MCF 10A (cell line): ENCODE measurements at regions of chr7 and their contacts with region 1.

Region 1: DNA sequence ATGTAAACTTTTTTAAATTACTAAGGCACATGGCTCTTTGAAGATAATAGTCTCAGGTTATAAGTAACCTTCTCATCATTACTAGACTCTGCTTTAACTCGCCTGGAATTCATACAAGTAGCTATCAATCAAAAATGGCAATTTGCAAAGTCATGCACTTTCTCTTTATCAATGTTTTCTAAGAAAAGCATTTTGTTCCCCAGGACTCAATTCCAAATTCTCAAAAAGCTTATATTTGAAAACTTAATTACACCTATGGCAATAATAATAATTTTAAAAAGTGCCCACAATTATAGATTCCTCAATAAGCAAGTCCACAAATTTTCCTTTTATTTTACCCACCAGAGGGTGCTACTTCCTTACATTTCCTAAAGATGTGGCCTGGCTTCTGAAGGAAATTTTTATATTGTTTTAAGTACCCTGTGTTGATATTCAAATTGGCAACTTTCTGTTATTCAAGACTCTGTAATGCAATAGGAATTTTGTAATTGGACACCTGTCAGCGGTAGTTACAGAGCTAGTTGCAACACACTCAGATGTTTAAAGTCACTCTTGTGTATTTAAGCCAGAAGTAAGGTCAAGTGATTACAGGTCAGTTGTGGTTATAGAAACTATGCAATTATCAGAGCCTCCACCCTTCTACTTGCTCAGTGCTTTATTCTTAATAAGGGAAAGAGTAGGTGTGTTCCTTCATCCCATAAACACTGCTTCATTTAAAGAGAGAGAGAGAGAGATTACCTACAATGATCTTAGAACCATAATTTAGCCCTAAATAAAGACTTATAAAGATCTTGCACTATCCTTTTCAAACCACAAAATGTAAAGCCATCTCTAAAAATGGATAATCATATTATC is 47.1 kb upstream of the HYAL4 start:
- DNase-seq: peak; percentile 95
- H3K4me3 Mint-ChIP-seq: peak overlapping the region; percentile 63
- H3K27ac Mint-ChIP-seq: peak overlapping the region; percentile 94
- H3K4me1 Mint-ChIP-seq: peaks cover 12% of the 10 kb centered on the region
- H3K27me3 Mint-ChIP-seq: no peaks in the 10 kb centered on the region
- CTCF ChIP-seq: peak; percentile 51

Region 2: GRCh38 chr7:123580406-123581161 is 217.3 kb before region 1 on chr7:
- CTCF ChIA-PET with region 1: interaction called, 10 read pairs
- POLR2A ChIA-PET with region 1: no interaction called
- intact Hi-C with region 1: loop called (anchors 5 kb)
- DNase-seq: peak; percentile 68
- H3K4me3 Mint-ChIP-seq: no peak overlapping the region
- H3K27ac Mint-ChIP-seq: no peak overlapping the region
- H3K4me1 Mint-ChIP-seq: no peaks in the 10 kb centered on the region
- H3K27me3 Mint-ChIP-seq: no peaks in the 10 kb centered on the region
- CTCF ChIP-seq: peak; percentile 66

Region 3: DNA sequence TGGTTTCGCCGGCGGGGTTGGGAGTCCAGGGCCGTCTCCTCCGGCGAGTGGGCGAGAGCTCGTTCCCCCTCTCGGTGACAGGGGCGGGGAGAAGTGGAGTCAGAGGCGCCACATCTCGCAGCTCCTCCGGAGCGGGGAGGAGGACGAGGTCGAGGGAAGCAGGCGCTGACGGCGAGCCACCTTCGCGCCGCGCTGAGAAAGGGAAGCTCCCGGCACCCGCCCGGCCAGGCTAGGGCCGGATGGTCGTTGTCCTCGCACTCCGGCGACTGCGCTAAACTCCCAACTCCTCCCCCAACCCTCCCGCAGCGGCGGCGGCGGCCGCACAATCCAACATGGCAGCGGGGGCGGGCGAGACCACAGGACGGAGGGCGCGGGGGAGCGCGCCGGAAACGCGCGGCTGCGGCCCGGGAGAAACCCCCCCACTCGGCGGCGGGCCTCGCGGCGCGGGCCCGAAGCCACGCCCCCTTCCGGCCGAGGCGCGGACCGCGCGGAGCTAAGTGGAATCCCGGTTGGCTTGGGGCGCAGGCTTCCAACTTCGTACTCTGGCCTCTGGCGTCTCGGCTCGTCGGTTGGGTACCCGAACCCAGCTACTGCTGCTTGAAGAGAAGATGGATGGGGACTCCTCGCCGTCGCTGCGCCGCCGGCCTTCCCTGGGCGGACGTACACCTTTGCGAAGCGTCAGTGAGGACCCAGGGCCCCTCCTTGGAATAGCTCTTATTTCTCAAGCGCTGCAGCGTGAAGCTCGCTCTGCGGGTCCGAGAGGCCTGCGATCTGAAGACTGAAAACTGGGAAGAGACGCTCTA is 49.0 kb before region 1 on chr7 and contains the start of gene WASL:
- CTCF ChIA-PET with region 1: interaction called, 8 read pairs
- POLR2A ChIA-PET with region 1: interaction called, 48 read pairs
- intact Hi-C with region 1: loop called (anchors 1 kb)
- DNase-seq: peak; percentile 87
- H3K4me3 Mint-ChIP-seq: peak within 1 kb of the TSS; percentile 98
- H3K27ac Mint-ChIP-seq: peak within 1 kb of the TSS; percentile 99
- H3K4me1 Mint-ChIP-seq: peaks cover 44% of the 10 kb centered on the region
- H3K27me3 Mint-ChIP-seq: no peaks in the 10 kb centered on the region
- CTCF ChIP-seq: no peak
- total RNA-seq, gene WASL: 34.7 and 38.8 TPM in 2 replicates

Region 4: DNA sequence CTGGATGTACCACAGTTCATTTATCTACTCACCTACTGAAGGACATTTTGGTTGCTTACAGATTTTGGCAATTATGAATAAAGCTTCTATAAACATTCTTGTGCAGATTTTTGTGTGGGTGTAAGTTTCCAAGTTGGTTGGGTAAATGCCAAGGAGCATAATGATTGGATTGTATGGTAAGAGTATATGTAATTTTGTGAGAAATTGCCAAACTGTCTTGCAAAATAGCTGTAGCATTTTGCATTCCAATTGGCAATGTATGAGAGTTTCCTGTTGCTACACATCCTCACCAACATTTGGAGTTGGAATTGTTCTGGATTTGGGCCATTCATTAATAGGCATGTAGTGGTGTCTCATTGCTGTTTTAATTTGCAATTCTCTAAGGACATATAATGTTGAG is 13.2 kb after region 1 on chr7:
- CTCF ChIA-PET with region 1: interaction called, 7 read pairs
- POLR2A ChIA-PET with region 1: interaction called, 12 read pairs
- intact Hi-C with region 1: no loop called
- DNase-seq: peak; percentile 95
- H3K4me3 Mint-ChIP-seq: no peak overlapping the region
- H3K27ac Mint-ChIP-seq: peak overlapping the region; percentile 11
- H3K4me1 Mint-ChIP-seq: peaks cover 6% of the 10 kb centered on the region
- H3K27me3 Mint-ChIP-seq: no peaks in the 10 kb centered on the region
- CTCF ChIP-seq: no peak

Region 5: DNA sequence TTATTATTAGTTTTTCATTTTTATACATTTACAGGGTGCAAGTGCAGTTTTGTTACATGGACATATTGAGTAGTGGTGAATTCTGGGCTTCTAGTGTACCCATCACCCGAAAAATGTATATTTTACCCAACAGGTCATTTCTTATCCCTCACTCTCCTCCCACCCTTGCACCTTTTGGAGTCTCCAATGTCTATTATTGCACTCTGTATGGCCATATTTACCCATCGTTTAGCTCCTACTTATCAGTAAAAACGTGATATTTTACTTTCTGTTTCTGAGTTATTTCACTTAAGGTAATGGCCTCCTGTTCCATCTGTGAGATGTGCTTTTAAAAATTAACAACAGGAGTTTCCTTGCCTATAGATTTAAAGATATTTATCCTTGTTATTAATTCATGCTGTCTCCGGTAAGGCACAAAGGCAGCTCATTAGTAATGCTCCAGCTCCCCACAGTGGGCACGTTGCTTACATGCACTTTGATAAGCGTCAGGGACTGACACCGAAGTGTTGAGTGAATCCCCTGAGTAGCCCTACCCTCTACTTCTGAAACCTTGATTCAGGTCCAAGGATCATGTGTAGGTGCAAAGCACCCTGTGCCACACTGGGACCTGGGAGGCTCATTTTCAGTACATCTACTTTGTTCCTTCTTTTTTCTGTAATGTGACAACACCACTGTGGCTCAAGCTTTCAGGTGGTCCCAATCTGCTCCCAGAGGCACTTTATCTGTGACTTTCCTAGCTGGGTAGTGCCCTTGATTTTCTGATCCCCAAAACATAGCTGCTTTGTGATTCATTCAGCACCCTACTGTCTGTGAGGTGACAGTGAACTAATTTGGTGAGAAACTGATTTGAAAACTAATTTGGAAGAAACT is 74.3 kb after region 1 on chr7:
- CTCF ChIA-PET with region 1: interaction called, 68 read pairs
- POLR2A ChIA-PET with region 1: interaction called, 13 read pairs
- intact Hi-C with region 1: loop called (anchors 2 kb)
- DNase-seq: peak; percentile 72
- H3K4me3 Mint-ChIP-seq: no peak overlapping the region
- H3K27ac Mint-ChIP-seq: no peak overlapping the region
- H3K4me1 Mint-ChIP-seq: no peaks in the 10 kb centered on the region
- H3K27me3 Mint-ChIP-seq: no peaks in the 10 kb centered on the region
- CTCF ChIP-seq: peak; percentile 48

Region 6: DNA sequence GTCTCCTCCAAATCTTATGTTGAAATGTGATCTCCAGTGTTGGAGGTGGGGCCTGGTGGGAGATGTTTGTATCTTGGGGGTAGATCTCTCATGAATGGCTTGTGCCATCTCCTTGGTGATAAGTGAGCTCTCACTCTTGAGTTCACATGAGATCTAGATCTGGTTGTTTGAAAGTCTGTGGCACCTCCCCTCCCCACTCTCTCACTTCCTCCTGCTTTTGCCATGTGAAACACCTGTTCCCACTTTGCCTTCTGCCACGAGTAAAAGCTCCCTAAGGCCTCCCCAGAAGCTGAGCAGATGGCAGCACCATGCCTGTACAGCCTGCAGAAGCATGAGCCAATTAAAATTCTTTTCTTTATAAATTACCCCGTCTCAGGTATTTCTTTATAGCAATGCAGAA is 211.4 kb after region 1 on chr7:
- CTCF ChIA-PET with region 1: no interaction called
- POLR2A ChIA-PET with region 1: no interaction called
- intact Hi-C with region 1: no loop called
- DNase-seq: no peak
- H3K4me3 Mint-ChIP-seq: no peak overlapping the region
- H3K27ac Mint-ChIP-seq: no peak overlapping the region
- H3K4me1 Mint-ChIP-seq: no peaks in the 10 kb centered on the region
- H3K27me3 Mint-ChIP-seq: no peaks in the 10 kb centered on the region
- CTCF ChIP-seq: no peak

Region 7: DNA sequence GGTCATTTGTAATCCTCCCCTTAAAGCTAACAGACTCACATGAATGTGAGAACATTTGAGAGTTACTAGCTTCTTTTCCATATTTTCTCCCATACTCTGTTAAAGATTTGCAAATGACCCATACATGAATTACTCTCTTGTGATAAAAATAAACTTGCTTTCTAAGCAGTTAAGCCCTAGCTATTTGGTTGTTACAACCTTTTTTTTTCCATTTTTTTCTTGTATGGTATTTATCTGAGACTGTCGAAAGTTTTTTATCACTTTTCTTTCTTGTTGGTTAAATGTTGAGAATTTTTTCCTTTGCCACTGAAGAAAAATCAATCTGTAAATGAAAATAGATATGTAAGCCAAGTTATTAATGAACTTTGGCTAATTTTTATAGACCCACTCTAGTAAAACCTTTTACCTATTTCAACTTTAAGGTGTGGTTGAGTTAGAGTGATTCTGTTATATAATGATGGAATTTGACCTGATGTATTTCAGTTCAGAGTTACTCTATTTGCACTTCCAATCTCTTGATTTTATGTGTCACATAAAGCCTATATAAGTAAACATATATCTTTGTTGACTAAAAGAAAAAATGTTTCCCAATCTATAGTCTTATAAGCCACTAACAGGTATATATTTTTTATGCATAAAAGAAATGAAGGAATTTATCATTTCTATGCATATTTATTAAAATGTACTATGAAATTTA is 253.9 kb after region 1 on chr7:
- CTCF ChIA-PET with region 1: no interaction called
- POLR2A ChIA-PET with region 1: no interaction called
- intact Hi-C with region 1: no loop called
- DNase-seq: no peak
- H3K4me3 Mint-ChIP-seq: no peak overlapping the region
- H3K27ac Mint-ChIP-seq: no peak overlapping the region
- H3K4me1 Mint-ChIP-seq: no peaks in the 10 kb centered on the region
- H3K27me3 Mint-ChIP-seq: no peaks in the 10 kb centered on the region
- CTCF ChIP-seq: no peak

Region 8: DNA sequence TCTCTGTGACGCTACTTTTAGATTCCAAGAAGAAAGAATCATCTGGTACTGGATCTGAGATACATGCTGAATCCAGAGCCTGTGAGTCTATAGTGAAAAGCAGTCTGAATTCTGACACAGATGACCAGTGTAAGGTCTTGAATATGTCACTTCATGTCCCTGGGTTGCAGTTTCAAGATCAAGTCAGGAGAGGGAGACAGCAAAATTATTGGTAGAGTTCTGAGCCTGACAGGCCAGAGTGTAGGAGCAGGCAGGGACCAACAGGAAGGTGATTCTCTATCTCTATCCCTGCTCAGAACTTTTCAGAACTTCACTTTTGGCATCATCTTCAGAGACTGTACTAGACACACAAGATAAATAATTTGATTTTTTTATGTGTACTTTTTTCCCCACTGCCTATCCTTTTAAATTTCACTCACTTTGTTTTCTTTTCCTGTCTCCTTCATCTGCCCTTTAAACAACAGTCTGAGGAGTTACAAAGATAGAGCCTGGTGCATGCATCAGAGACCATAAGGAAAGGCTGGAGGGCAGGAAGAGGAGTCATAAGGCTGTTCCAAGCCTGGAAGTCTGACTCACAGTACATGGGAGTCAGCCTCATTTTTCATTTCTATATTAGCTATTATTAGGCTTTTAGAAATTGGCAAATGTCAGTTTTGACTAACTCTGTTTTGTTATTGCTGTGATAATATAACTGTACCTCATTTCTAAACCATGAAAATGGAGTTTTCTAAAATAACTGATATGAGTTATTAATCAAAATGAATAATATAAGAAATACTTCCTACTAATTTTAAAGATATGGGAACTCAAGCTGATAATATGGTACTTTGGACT is 355.2 kb after region 1 on chr7:
- CTCF ChIA-PET with region 1: interaction called, 7 read pairs
- POLR2A ChIA-PET with region 1: no interaction called
- intact Hi-C with region 1: loop called (anchors 2 kb)
- DNase-seq: peak; percentile 62
- H3K4me3 Mint-ChIP-seq: no peak overlapping the region
- H3K27ac Mint-ChIP-seq: peak overlapping the region; percentile 75
- H3K4me1 Mint-ChIP-seq: peaks cover 9% of the 10 kb centered on the region
- H3K27me3 Mint-ChIP-seq: no peaks in the 10 kb centered on the region
- CTCF ChIP-seq: peak; percentile 29